ENCODE measurements at regions of chr6 and their contacts with region 1.

Region 1: GRCh38 chr6:70107852-70108629 is 194.8 kb downstream of the COL9A1 start:
- DNase-seq: no peak
- H3K4me3 ChIP-seq: no peak overlapping the region
- H3K27ac ChIP-seq: no peak overlapping the region
- H3K4me1 ChIP-seq: no peaks in the 10 kb centered on the region
- H3K27me3 ChIP-seq: no peaks in the 10 kb centered on the region
- CTCF ChIP-seq: peak; percentile 31 to 71 (median 60)
- POLR2A ChIP-seq: no peak

Region 2: GRCh38 chr6:69835414-69836179 is 272.4 kb before region 1 on chr6:
- intact Hi-C with region 1: loop called in 1 of 2 experiments (anchors 10 kb)
- DNase-seq: peak in 5 of 7 donors; percentile 14 to 50 (median 22)
- H3K4me3 ChIP-seq: no peak overlapping the region
- H3K27ac ChIP-seq: no peak overlapping the region
- H3K4me1 ChIP-seq: peaks cover 0 to 4% of the 10 kb centered on the region in 2 donors
- H3K27me3 ChIP-seq: no peaks in the 10 kb centered on the region
- CTCF ChIP-seq: peak; percentile 47 to 82 (median 69)
- POLR2A ChIP-seq: no peak

Region 3: GRCh38 chr6:70520575-70520974 is 412.5 kb after region 1 on chr6:
- intact Hi-C with region 1: no loop called
- DNase-seq: no peak
- H3K4me3 ChIP-seq: no peak overlapping the region
- H3K27ac ChIP-seq: no peak overlapping the region
- H3K4me1 ChIP-seq: no peaks in the 10 kb centered on the region
- H3K27me3 ChIP-seq: no peaks in the 10 kb centered on the region
- CTCF ChIP-seq: peak in 5 of 6 experiments; percentile 14 to 36 (median 29)
- POLR2A ChIP-seq: no peak